Activated CD4-positive, alpha-beta memory T cell treated with anti-CD3 and anti-CD28 coated beads, Interleukin-2, amount 10 ng/mL, durations not matched to agents 7 days and 5 days (primary cell): ENCODE measurements at regions of chr7 and their contacts with region 1.

Region 1: GRCh38 chr7:130205084-130205947 is at the start of gene TMEM209:
- DNase-seq: peak; percentile 95
- H3K4me3 Mint-ChIP-seq: peak within 1 kb of the TSS; percentile 97
- H3K27ac Mint-ChIP-seq: peak within 1 kb of the TSS; percentile 94
- H3K4me1 Mint-ChIP-seq: peaks cover 42% of the 10 kb centered on the region
- H3K27me3 Mint-ChIP-seq: no peaks in the 10 kb centered on the region
- total RNA-seq, gene TMEM209: 35.5 to 35.7 TPM

Region 2: GRCh38 chr7:130182990-130183389 is 22.3 kb before region 1 on chr7:
- CTCF ChIA-PET with region 1: interaction called, 4 read pairs
- POLR2A ChIA-PET with region 1: interaction called, 27 read pairs
- DNase-seq: no peak
- H3K4me3 Mint-ChIP-seq: no peak overlapping the region
- H3K27ac Mint-ChIP-seq: peak overlapping the region; percentile 59
- H3K4me1 Mint-ChIP-seq: peaks cover 27% of the 10 kb centered on the region
- H3K27me3 Mint-ChIP-seq: no peaks in the 10 kb centered on the region

Region 3: DNA sequence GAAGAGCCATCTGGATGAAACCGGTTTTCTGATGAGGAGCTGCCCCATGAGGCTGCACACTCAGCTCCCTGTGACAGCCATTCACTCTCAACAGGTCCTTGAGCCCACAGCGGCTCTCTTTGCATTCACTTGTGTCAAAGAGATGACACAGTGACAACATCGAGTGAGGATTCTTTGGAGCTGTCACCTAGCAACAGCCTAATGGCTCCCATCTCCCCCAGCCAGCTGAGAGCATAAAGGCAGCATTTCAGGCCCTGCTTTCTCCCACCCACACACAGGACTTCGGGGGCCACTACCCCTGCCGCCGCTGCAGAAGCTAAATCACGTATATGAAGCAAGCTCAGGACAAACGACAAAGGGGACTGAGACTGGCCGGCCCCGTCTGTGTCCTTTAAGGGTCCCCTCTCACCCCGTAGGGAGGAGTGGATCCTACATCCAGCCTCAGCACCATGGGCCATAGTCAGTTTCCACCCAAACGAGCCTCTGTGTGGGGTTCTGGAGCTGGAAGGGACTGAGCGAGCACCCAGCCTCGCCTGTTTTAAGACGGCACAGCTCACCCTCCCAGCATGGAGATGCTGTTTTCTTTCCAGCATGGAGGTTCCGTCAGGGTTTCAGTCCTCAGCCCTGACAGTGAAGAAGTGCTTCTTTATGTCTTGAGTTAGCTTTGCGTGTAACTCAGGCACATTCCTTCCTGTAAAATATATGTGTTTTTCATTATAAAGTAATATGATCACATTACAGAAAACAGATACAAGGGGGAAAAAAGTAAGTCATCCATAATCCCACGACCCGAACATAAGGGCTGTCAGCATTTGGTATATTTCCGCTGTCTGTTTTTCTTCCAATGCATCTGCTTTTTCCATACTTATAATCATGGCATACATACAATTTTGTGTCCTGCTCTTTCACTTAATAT is 92.6 kb after region 1 on chr7:
- CTCF ChIA-PET with region 1: no interaction called
- POLR2A ChIA-PET with region 1: no interaction called
- DNase-seq: no peak
- H3K4me3 Mint-ChIP-seq: no peak overlapping the region
- H3K27ac Mint-ChIP-seq: no peak overlapping the region
- H3K4me1 Mint-ChIP-seq: no peaks in the 10 kb centered on the region
- H3K27me3 Mint-ChIP-seq: peaks cover 11% of the 10 kb centered on the region

Region 4: DNA sequence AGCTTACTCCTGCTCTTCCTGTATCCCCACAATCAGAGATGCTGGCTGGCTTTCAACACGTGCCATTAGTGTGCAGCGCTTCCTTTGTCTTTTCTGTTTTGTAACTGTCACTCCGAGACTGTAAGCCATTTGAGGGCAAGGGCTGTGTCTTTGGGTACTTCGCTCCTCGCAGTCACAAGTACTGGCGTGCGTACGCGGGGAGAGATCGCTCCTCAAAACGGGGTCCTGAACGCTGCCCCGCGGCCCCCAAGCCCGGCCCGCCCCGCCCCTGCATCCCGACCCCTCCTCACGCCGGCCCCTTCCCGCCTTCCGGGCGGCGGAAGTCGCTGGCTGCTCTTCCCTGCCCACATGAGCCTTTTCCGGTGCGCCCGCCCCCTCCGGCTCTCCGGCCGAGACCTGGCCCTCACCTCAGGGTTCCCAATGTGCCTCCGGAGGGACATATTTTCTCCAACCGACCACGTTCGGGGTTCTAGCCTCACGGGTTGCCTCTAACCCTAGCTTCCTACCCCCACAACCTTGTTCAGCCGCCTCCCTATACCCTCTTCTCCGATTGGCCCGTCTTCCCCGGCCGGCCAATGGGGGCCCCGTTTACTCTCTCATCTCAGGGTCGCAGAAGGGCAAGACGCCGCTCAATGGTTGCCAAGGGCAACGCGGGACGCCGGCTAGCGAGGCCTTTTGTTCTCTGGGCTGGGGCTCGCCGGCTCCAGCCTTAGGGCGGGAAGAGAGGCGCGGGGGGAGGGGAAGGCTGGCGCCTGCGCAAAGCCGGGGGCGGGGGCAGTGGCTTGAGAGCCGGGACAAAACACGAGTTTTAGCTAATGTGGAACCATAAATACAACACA is 235.4 kb after region 1 on chr7 and contains the start of gene CEP41:
- CTCF ChIA-PET with region 1: interaction called, 3 read pairs
- POLR2A ChIA-PET with region 1: interaction called, 10 read pairs
- DNase-seq: peak; percentile 94
- H3K4me3 Mint-ChIP-seq: peak within 1 kb of the TSS; percentile 98
- H3K27ac Mint-ChIP-seq: peak within 1 kb of the TSS; percentile 87
- H3K4me1 Mint-ChIP-seq: peaks cover 38% of the 10 kb centered on the region
- H3K27me3 Mint-ChIP-seq: no peaks in the 10 kb centered on the region
- total RNA-seq, gene CEP41: 13.2 to 15.7 TPM